ENCODE measurements at regions of chr5 and their contacts with region 1.

Region 1: DNA sequence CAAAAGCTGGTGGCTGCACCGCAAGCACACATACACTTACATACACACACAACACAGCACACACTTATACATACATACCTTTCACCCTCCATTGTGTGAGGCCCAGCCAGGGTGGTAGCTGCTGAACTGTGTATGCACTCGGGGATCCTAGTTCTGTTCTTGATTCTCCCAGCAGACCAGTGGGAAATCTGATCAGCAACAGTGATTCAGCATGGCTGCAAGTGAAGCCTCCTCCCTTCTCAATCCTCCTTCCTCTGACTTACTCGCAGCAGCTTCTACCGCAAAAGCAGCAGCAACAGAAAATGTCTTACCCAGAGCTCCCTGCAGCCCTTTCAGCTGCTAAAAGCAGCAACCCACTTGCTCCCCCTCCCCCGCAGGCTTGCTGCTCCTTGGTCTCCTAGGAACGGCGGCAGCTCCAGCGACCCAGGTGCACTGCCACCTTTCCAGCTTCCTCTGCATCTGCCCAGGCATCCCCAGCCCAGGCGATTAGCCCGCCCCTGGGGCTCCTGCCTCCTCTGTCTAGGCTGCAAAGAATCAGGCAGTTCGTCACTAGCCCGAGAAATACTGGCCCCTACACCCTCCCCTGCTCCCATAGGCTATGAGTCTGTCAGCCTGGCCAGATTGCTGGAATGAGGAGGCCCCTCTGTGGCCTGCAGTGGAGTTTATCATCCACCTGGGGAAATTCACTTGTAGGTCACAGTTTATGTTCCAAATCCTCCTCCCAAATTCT is at the start of gene KLHL3:
- DNase-seq: peak; percentile 13
- ATAC-seq: peak; percentile 93
- H3K4me3 ChIP-seq: peak within 1 kb of the TSS; percentile 36 to 56 (median 46)
- H3K27ac ChIP-seq: no peak within 1 kb of the TSS
- H3K4me1 ChIP-seq: peaks cover 20% of the 10 kb centered on the region
- H3K27me3 ChIP-seq: peaks cover 2 to 42% of the 10 kb centered on the region in 2 experiments; a peak in 4 of 5 replicates
- CTCF ChIP-seq: peak; percentile 65
- EP300 ChIP-seq: no peak
- POLR2A ChIP-seq: no peak
- RAD21 ChIP-seq: no peak
- total RNA-seq, gene KLHL3: 0.02 TPM in 1 of 2 replicates, not detected in the other

Region 2: GRCh38 chr5:137660349-137660817 is 75.3 kb before region 1 on chr5:
- CTCF ChIA-PET with region 1: interaction called, 5 read pairs
- POLR2A ChIA-PET with region 1: no interaction called
- in situ Hi-C with region 1: loop called (anchors 5 kb)
- intact Hi-C with region 1: no loop called
- DNase-seq: peak; percentile 63
- ATAC-seq: peak; percentile 95
- H3K4me3 ChIP-seq: no peak overlapping the region
- H3K27ac ChIP-seq: no peak overlapping the region
- H3K4me1 ChIP-seq: no peaks in the 10 kb centered on the region
- H3K27me3 ChIP-seq: no peaks in the 10 kb centered on the region
- CTCF ChIP-seq: peak; percentile 89
- EP300 ChIP-seq: no peak
- POLR2A ChIP-seq: no peak
- RAD21 ChIP-seq: peak; percentile 66